Activated naive CD4-positive, alpha-beta T cell treated with anti-CD3 and anti-CD28 coated beads for 36 hours (primary cell): ENCODE measurements at regions of chr15 and their contacts with region 1.

Region 1: GRCh38 chr15:90931737-90932659 is at the start of gene HDDC3:
- DNase-seq: peak; percentile 95
- H3K4me3 Mint-ChIP-seq: peak within 1 kb of the TSS; percentile 99
- H3K27ac Mint-ChIP-seq: peak within 1 kb of the TSS; percentile 100
- H3K4me1 Mint-ChIP-seq: peaks cover 41% of the 10 kb centered on the region
- H3K27me3 Mint-ChIP-seq: no peaks in the 10 kb centered on the region
- total RNA-seq, gene HDDC3: 49.8 to 51.3 TPM

Region 2: DNA sequence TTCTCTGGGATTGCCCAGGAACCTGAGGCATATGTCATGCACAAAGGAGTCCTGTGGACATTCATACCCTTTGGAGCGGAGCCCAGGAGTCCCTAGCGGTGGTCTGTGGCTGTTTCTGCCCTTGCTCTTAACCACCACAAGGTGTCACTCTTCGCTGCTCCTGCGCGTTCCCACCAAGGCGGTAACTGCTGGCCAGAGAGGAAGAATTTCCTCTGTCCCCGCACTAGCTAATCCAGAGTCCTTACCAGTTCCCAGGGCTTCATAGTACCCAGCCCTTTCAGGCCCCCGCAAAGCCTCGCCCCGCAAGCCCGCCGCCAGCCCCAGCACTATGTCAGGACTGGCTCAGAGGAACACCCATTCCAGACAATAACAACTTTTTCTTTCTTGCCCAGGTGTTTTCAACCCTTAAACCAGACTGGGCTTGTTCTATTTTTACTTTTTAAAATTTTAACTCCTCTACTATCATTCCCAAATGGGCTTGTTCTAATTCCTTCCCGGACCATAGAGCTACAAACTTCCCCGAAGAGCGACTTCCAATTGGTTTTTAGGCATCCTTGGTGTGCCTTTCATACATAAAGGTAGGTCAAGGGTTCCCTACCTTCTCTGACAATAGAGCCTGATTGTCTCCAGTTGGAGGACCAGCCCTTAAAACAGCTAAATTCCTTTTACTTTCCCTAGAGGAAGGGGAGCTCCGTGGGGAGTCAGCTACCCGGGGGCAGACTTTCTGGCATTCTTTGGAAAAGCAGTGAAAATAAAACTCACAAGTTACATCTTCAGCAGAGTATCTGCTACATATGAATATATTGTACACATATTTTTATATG is 611.7 kb before region 1 on chr15:
- CTCF ChIA-PET with region 1: interaction called, 11 read pairs
- intact Hi-C with region 1: loop called (anchors 5 kb)
- DNase-seq: peak; percentile 75
- H3K4me3 Mint-ChIP-seq: no peak overlapping the region
- H3K27ac Mint-ChIP-seq: no peak overlapping the region
- H3K4me1 Mint-ChIP-seq: peaks cover 4% of the 10 kb centered on the region
- H3K27me3 Mint-ChIP-seq: no peaks in the 10 kb centered on the region

Region 3: DNA sequence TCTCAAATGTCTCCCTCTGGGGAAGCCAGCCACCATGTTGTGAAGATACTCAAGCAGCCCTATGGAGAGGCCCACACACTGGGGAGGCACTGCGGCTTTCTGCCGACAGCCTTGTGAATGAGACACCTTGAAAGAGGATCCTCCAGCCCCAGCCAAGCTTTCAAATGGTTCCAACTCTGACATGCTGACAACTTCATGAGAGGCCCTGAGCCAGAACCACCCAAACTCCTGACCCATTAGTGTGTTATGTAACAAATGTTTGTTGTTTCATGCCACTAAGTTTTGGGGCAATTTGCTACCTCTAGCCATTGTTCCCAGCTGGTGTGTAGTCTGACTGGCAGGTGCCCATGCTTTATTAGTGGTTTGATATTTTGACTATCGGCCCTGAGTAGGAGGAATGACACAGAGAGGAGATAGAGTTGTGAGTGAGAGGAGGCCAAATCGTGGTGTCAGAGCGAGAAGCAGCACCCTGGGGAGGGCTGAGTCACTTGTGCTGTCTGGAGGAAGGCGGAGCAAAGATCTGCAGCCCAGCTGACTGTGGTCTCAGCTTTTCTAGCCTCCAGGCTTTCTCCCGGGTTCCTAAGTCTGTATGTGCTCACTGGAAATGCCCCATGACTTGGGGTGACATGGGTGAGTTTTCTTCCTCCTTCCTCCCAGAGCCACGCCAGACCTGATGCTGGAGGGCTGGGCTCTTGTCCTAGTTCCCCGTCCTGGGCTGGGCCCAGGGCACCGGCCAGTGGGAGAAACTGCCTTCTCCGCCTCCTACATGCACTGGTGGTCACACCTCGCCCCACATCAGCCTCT is 271.6 kb before region 1 on chr15:
- CTCF ChIA-PET with region 1: interaction called, 4 read pairs
- intact Hi-C with region 1: loop called (anchors 1 kb)
- DNase-seq: peak; percentile 90
- H3K4me3 Mint-ChIP-seq: peak overlapping the region; percentile 32
- H3K27ac Mint-ChIP-seq: peak overlapping the region; percentile 0
- H3K4me1 Mint-ChIP-seq: peaks cover 72% of the 10 kb centered on the region
- H3K27me3 Mint-ChIP-seq: peaks cover 21% of the 10 kb centered on the region

Region 4: DNA sequence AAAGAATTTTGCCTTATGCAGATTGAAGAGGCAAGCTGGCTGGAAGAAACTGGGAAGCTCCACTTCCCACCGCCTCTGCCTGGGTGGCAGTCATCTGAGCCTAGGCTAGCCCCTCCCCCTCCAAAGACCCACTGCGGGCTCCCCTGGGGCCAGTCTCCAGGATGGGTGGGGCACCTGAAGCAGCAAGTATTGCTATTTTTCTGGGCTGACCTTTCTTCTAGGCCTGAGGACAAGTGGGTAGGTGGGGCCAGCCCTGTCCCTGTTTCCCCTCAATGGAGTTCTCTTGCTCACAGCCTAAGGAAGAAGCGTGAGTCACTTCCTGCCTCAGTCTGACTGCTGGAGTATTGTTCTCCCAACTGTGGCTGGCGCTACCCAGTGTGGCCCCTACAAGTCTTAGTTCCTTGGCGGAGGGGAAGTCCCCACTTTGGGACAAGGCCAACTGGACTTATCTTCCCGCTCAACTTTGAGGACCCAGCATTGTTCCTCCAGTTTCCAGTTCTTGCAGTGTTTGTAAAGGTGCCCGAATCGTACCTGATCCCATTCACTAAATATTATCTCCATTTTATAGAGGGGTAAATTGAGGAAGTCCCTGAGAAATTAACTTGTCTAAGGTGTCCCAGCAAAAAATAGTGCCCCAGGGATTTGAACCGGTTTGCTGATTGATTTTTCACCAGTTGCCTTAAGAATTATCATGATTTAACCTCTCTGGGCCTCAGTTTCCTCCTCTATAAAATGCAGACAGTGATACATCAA is 62.2 kb before region 1 on chr15:
- CTCF ChIA-PET with region 1: interaction called, 3 read pairs
- intact Hi-C with region 1: loop called (anchors 2 kb)
- DNase-seq: peak; percentile 87
- H3K4me3 Mint-ChIP-seq: peak overlapping the region; percentile 93
- H3K27ac Mint-ChIP-seq: peak overlapping the region; percentile 99
- H3K4me1 Mint-ChIP-seq: peaks cover 46% of the 10 kb centered on the region
- H3K27me3 Mint-ChIP-seq: no peaks in the 10 kb centered on the region

Region 5: DNA sequence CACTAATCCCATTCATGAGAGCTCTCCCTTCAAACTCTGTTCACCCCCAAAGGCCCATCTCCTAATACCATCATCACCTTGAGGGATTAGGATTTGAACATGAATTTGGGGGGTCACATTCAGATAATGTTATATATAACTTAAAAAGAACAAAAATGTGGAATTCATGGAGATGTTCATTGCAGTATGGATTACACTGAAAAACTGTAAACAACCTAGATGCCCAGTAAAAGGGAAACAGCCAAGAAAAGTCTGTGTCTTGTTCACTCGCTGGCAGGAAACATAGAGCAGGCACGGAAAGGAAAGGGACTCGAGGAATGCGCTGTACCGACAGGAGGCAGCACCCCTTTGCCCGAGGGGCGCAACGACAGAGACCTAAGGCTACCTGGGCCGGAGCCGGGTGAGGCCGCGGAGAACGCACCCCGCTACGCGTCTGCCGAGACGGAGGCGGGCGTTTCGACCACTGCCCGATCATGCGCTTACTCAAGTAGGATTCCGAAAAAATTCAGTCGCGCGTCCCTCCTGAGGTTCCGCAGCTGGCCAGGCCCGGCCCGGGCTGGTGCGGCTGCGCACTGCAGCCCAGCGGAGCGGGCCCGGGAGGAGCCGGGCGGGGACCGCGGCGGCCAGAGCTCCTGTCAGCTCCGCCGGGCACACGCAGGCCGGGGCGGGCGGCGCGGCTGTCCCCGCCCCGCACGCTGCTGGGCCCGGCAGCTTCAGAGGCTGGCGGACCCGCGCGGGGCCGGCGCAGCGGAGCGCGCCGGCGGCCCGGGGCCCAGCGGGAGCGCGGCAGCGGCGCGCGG is 29.8 kb before region 1 on chr15:
- CTCF ChIA-PET with region 1: interaction called, 169 read pairs
- intact Hi-C with region 1: loop called (anchors 1 kb)
- DNase-seq: peak; percentile 84
- H3K4me3 Mint-ChIP-seq: peak overlapping the region; percentile 86
- H3K27ac Mint-ChIP-seq: peak overlapping the region; percentile 88
- H3K4me1 Mint-ChIP-seq: peaks cover 27% of the 10 kb centered on the region
- H3K27me3 Mint-ChIP-seq: no peaks in the 10 kb centered on the region

Region 6: DNA sequence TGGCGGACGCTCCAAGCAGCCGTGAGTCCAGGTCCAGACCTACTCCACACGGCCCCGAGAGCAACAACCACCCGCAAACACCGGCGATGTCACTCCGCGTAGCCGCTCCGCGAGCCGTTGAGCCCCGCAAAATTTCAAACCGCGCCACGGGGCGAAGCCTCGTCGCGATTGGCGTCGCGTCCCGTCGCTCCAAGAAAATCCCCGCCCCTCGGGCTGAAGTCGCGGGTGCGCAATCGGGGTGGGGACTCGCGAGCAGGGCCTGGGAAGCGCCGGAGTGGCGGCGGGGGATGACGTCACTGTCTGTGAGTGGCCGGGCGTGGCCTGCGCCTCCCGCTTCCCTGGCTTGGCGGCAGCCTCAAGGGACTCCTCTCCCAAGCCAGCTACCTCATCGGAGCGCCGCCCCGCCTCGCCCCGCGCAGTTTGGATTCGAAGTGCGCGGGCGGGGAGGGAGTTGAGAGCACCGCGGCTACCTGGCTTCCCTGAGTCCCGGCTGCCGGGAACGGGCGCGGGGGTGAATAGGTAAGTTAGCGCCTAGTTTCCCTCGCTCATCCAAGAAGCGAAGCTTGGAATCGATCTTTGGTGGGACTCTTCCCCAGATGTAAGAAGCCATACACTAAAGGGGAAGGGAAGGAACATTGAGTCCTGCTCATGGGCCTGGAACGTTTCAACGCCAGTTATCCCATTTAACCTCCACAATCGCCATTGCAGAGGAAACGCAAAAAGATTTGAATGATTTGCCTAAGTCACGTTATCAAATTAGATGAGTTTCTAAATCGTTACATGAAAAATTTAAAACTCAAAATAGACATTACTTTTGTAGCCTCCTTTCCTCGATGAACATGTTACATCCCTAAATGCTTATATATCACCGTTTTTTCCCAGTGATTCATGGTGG is 62.7 kb after region 1 on chr15 and contains the start of gene PRC1:
- CTCF ChIA-PET with region 1: no interaction called
- intact Hi-C with region 1: loop called (anchors 1 kb)
- DNase-seq: peak; percentile 99
- H3K4me3 Mint-ChIP-seq: peak within 1 kb of the TSS; percentile 100
- H3K27ac Mint-ChIP-seq: peak within 1 kb of the TSS; percentile 98
- H3K4me1 Mint-ChIP-seq: peaks cover 24% of the 10 kb centered on the region
- H3K27me3 Mint-ChIP-seq: no peaks in the 10 kb centered on the region
- total RNA-seq, gene PRC1: 173 TPM